ENCODE measurements at regions of chr4 and their contacts with region 1.

Region 1: GRCh38 chr4:1899149-1900086 is 28.2 kb downstream of the NSD2 start:
- DNase-seq: peak; percentile 83
- H3K4me3 Mint-ChIP-seq: no peak overlapping the region
- H3K27ac Mint-ChIP-seq: peak overlapping the region; percentile 80
- H3K4me1 Mint-ChIP-seq: peaks cover 64% of the 10 kb centered on the region
- H3K27me3 Mint-ChIP-seq: no peaks in the 10 kb centered on the region

Region 2: GRCh38 chr4:1870578-1871443 is 28.6 kb before region 1 on chr4 and contains the start of gene NSD2:
- CTCF ChIA-PET with region 1: interaction called, 13 read pairs
- POLR2A ChIA-PET with region 1: interaction called, 3 read pairs
- DNase-seq: peak; percentile 88
- H3K4me3 Mint-ChIP-seq: peak within 1 kb of the TSS; percentile 89
- H3K27ac Mint-ChIP-seq: peak within 1 kb of the TSS; percentile 97
- H3K4me1 Mint-ChIP-seq: peaks cover 45% of the 10 kb centered on the region
- H3K27me3 Mint-ChIP-seq: peaks cover 2% of the 10 kb centered on the region
- total RNA-seq, gene NSD2: 248 to 271 TPM

Region 3: DNA sequence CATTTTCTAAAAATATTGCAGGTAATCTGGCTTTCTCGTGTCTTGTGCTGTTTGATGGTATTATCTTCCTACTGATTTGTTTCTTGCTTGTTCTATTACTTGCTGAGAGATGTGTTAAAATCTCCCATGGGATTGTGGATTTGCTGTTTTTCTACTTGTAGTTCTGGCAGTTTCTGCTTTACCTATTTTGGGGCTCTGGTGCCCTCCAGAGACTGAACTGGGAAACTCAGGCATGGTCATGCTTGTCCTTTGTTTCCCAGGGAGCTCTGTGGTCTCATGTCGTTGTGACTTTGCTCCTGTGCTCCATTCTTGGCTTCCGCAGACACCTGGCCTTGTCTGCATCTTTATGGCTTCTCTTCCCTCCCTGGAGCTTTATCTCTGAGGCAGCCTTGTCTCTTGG is 11.2 kb after region 1 on chr4:
- CTCF ChIA-PET with region 1: interaction called, 10 read pairs
- POLR2A ChIA-PET with region 1: no interaction called
- DNase-seq: peak; percentile 38
- H3K4me3 Mint-ChIP-seq: no peak overlapping the region
- H3K27ac Mint-ChIP-seq: peak overlapping the region; percentile 1
- H3K4me1 Mint-ChIP-seq: peaks cover 43% of the 10 kb centered on the region
- H3K27me3 Mint-ChIP-seq: no peaks in the 10 kb centered on the region